ENCODE measurements at regions of chr19 and their contacts with region 1.

Region 1: DNA sequence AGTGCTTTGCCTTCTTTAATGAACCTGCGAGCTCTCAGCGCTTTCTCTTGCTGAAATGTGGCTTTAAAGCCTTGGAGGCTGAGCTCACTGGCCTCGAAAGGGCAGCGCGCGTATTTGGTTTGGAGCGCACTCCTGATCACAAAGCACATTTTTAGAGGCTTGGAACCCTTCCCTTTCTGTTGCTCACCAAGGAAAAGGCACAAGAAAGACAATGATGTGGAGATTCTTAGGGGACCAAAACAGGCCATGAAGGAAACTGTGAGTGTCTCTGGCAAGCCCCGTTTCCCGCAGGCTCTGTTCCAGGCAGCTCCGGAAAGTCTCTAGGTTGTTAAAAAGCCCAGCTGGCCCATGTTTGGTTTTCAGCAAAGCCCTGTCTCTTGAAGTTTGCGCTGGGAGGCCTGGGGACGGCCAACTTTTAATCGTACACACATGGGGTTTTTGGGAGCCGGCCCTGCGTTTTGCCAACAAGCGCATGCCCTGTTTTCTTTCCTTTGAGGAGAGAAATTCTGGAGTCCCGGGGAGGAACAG is 9.4 kb upstream of the SPC24 start:
- DNase-seq: peak; percentile 84

Region 2: GRCh38 chr19:11182994-11183393 is 18.1 kb after region 1 on chr19:
- intact Hi-C with region 1: loop called (anchors 2 kb)
- DNase-seq: no peak

Measured in cardiac septum (tissue), 1 donor.